ENCODE measurements at regions of chr16 and their contacts with region 1.

Region 1: DNA sequence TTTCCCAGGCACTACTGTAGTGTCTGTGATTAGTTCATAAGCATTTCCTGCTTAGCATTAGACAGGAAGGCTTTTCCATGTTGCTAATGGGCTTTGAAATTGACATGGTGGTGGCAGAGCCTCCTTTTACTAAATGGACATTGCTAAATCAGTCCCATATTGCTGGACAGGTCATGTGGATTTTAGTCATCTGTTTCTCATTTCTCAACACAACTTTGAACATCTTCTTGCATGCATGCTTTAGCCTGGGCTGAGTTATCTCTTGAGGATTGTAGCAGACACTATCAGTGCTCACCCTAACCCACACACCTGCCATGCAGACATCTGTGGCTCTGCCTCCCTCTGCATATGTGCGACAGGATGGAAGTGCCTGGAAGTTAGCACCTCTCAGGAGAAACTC is 13.6 kb upstream of the BCO1 start:
- DNase-seq: no peak
- H3K4me3 ChIP-seq: no peak overlapping the region
- H3K27ac ChIP-seq: no peak overlapping the region
- H3K4me1 ChIP-seq: no peaks in the 10 kb centered on the region
- H3K27me3 ChIP-seq: no peaks in the 10 kb centered on the region
- CTCF ChIP-seq: no peak
- POLR2A ChIP-seq: no peak

Region 2: GRCh38 chr16:80816365-80816764 is 408.5 kb before region 1 on chr16:
- intact Hi-C with region 1: no loop called
- DNase-seq: no peak
- H3K4me3 ChIP-seq: no peak overlapping the region
- H3K27ac ChIP-seq: no peak overlapping the region
- H3K4me1 ChIP-seq: no peaks in the 10 kb centered on the region
- H3K27me3 ChIP-seq: peaks cover 4% of the 10 kb centered on the region
- CTCF ChIP-seq: no peak
- POLR2A ChIP-seq: no peak

Region 3: DNA sequence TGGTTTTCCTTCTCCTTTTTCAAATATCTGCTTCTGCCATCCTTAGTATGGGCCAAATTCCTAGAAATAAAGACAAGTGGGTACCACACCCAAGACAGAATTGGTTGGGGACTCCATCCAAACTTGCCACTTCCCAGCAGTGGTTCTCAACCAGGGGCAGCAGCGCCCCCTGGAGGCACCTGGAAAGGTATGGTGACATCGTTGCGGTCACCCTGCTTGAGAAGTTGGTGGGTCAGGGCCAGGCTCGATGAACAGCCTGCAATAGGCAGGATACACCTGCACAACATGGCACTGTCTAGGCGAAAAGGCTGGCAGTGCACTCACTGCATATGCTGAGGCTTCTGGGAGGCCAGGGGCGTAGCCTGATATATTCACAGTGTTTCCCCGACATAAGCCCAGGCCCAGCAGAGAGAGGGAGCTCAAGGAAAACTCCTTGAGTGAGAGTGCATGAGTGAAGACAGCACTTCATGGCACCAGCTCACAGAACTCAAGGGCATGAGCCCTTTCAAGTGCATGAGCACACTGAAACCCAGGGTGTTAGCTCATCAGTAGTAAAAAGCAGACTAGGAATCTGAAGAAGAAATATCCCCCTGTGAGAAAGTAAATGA is 275.9 kb before region 1 on chr16:
- intact Hi-C with region 1: no loop called
- DNase-seq: peak in 6 of 7 donors; percentile 58 to 84 (median 69)
- H3K4me3 ChIP-seq: no peak overlapping the region
- H3K27ac ChIP-seq: no peak overlapping the region
- H3K4me1 ChIP-seq: no peaks in the 10 kb centered on the region
- H3K27me3 ChIP-seq: no peaks in the 10 kb centered on the region
- CTCF ChIP-seq: peak; percentile 39 to 69 (median 58)
- POLR2A ChIP-seq: no peak

Region 4: GRCh38 chr16:81080233-81080632 is 144.6 kb before region 1 on chr16:
- intact Hi-C with region 1: no loop called
- DNase-seq: no peak
- H3K4me3 ChIP-seq: no peak overlapping the region
- H3K27ac ChIP-seq: no peak overlapping the region
- H3K4me1 ChIP-seq: peaks cover 0 to 13% of the 10 kb centered on the region in 2 donors
- H3K27me3 ChIP-seq: no peaks in the 10 kb centered on the region
- CTCF ChIP-seq: no peak
- POLR2A ChIP-seq: no peak

Region 5: GRCh38 chr16:81136390-81137342 is 88.2 kb before region 1 on chr16:
- intact Hi-C with region 1: loop called in 1 of 2 experiments (anchors 5 kb)
- DNase-seq: peak in 3 of 7 donors; percentile 6 to 54 (median 27)
- H3K4me3 ChIP-seq: no peak overlapping the region
- H3K27ac ChIP-seq: no peak overlapping the region
- H3K4me1 ChIP-seq: no peaks in the 10 kb centered on the region
- H3K27me3 ChIP-seq: no peaks in the 10 kb centered on the region
- CTCF ChIP-seq: no peak
- POLR2A ChIP-seq: no peak

Measured in adrenal gland (tissue), 19 donors.